Activated CD4-positive, alpha-beta memory T cell treated with anti-CD3 and anti-CD28 coated beads for 36 hours (primary cell): ENCODE measurements at regions of chr4 and their contacts with region 1.

Region 1: DNA sequence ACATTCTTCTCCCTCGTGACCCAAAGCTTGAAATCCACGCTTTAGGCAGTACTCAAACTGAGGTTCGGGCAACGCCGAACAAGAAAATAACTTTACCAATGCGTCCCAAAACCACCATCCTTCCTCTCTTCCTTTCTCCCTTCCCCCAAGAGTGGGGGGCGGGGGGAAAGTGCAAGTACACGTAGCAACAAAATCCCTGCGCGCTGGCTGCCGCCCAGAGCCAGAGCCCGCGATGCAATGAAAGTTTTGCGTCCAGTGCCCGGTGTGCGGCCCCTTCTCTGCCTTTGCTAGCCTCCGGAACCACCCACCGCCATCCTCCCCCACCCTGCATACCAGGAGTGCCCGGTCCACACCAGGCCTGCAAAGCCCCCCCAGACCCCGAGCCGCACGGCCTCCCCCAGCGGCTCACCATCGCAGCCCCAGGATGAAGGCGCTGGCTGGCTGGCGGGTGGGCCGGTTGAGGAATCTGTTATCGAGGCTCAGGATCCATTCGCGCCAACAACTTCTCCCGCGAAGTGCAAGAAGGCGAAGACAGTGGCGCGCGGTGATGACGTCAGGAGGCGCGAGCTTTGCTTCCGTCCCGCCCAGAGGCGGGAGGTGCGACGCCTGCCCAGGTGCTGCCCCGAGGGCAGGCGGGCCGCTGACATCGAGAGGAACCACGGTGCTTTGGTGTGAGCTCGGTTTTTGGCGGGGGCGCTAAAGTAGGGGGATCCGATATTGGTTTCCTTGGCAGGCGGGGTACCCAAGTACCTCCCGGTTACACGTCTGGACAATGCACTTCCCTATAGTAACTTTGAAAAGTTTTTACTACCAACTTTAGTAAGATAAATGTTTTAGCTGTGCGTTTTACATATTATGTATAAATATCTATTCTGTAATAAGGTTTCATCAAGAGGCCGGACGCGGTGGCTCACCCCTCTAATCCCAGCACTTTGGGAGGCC is at the start of gene RFC1:
- DNase-seq: peak; percentile 96
- H3K4me3 Mint-ChIP-seq: peak within 1 kb of the TSS; percentile 93
- H3K27ac Mint-ChIP-seq: peak within 1 kb of the TSS; percentile 92
- H3K4me1 Mint-ChIP-seq: peaks cover 42% of the 10 kb centered on the region
- H3K27me3 Mint-ChIP-seq: no peaks in the 10 kb centered on the region
- total RNA-seq, gene RFC1: 86.7 to 89.4 TPM

Region 2: GRCh38 chr4:39181905-39182638 is 184.0 kb before region 1 on chr4 and contains the start of gene WDR19:
- CTCF ChIA-PET with region 1: no interaction called
- POLR2A ChIA-PET with region 1: no interaction called
- intact Hi-C with region 1: loop called (anchors 5 kb)
- DNase-seq: peak; percentile 99
- H3K4me3 Mint-ChIP-seq: no peak within 1 kb of the TSS
- H3K27ac Mint-ChIP-seq: no peak within 1 kb of the TSS
- H3K4me1 Mint-ChIP-seq: peaks cover 5% of the 10 kb centered on the region
- H3K27me3 Mint-ChIP-seq: no peaks in the 10 kb centered on the region
- total RNA-seq, gene WDR19: 16.4 to 17.9 TPM